ENCODE measurements at regions of chr3 and their contacts with region 1.

Region 1: DNA sequence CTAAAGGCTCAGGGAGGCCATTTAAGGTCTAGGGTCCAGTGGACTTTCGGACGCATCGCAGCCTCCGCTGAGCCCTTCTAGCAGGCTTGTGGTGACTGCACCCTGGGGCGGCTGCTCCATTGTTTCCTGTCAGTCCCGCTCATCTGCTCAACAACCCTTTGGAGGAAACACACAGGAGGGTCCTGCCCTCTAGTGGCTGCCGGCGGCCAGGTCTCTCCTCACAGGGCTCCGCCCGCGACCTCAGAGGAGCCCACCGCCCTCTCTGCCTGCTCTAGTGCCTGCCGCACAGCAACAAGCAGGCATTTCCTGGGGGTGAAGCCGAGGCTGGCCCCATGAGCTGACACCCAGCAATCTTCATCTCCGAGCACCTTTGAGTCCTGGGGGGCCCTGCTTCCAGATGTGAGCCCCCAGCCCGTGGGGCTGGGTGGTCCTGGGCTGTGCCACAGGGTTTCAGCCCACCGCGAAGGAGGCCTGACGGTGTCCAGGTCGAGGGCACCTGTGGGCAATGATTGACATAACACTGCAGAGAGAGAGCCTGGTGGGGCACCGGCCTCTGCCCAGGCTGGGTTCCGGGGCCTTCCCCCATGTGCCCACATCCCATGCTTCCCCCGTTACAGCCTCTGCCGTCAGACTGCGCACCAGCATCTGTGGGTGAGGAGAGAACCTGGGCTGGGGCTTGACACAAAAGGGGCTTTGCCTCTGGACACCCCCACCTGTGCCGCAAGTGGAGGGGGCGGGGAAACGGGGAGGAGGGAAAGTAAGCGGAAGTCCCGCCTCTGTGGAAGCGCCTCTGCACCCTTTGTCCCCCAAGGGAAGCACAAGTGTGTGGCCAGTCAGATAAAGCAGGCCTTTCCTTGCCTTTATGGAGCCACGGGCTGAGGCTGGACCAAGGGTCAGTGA is 27.0 kb upstream of the SFMBT1 start:
- DNase-seq: peak; percentile 82 to 85
- ATAC-seq: peak; percentile 89 to 97 (median 95)
- H3K4me3 ChIP-seq: peak overlapping the region; percentile 33 to 80 (median 72)
- H3K27ac ChIP-seq: peak overlapping the region in 9 of 10 donors; percentile 44 to 85 (median 71)
- H3K4me1 ChIP-seq: peaks cover 4 to 20% (median 10%) of the 10 kb centered on the region in 9 donors
- H3K27me3 ChIP-seq: no peaks in the 10 kb centered on the region
- CTCF ChIP-seq: peak; percentile 79 to 98 (median 96)

Region 2: DNA sequence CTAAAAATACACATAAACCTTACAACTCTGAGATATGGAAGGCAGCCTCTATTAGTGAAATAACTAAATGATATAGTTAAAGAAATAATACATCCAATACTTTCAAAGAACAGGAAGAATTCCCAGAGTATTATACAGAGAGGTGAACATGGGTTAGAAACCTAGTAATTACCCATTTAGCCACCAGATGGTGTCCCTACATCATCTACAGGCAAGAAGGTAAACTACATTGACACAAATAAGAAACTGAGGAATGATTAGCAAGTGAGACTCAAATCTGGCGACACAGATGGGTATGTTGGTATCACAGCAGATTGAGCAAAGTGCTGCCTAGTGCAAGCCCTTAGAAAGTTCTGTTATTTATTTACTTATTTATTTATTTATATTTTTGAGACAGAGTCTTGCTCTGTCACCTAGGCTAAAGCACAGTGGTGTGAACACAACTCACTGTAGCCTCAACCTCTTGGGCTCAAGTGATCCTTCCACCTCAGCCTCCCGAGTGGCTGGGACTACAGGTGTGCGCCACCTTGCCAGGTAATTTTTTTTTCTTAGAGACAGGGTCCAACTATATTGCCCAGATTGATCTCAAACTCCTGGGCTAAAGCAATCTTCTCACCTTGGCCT is 330.4 kb before region 1 on chr3:
- intact Hi-C with region 1: loop called in 8 of 10 experiments (anchors 2 to 10 kb)
- DNase-seq: no peak
- ATAC-seq: peak in 1 of 8 donors; percentile 42
- H3K4me3 ChIP-seq: no peak overlapping the region
- H3K27ac ChIP-seq: no peak overlapping the region
- H3K4me1 ChIP-seq: no peaks in the 10 kb centered on the region
- H3K27me3 ChIP-seq: no peaks in the 10 kb centered on the region
- CTCF ChIP-seq: peak; percentile 35 to 71 (median 60)

Region 3: GRCh38 chr3:52770496-52771333 is 302.2 kb before region 1 on chr3 and contains the start of gene NEK4:
- intact Hi-C with region 1: loop called in 3 of 10 experiments (anchors 2 to 10 kb)
- DNase-seq: peak; percentile 95
- ATAC-seq: peak; percentile 99 to 100 (median 100)
- H3K4me3 ChIP-seq: peak within 1 kb of the TSS; percentile 59 to 98 (median 82)
- H3K27ac ChIP-seq: peak within 1 kb of the TSS in 9 of 10 donors; percentile 75 to 90 (median 85)
- H3K4me1 ChIP-seq: peaks cover 0 to 33% (median 14%) of the 10 kb centered on the region in 9 donors
- H3K27me3 ChIP-seq: no peaks in the 10 kb centered on the region
- CTCF ChIP-seq: peak in 2 of 9 donors; percentile 21 to 25
- total RNA-seq, gene NEK4: 12.9 to 21.4 (median 17.2) TPM

Region 4: GRCh38 chr3:52831500-52832301 is 241.2 kb before region 1 on chr3:
- intact Hi-C with region 1: loop called in 1 of 10 experiments (anchors 5 kb)
- DNase-seq: peak; percentile 41 to 54
- ATAC-seq: peak in 7 of 8 donors; percentile 2 to 45 (median 22)
- H3K4me3 ChIP-seq: peak overlapping the region in 1 of 10 donors; percentile 5
- H3K27ac ChIP-seq: peak overlapping the region in 8 of 10 donors; percentile 3 to 58 (median 34)
- H3K4me1 ChIP-seq: peaks cover 15 to 55% (median 38%) of the 10 kb centered on the region in 9 donors
- H3K27me3 ChIP-seq: no peaks in the 10 kb centered on the region
- CTCF ChIP-seq: no peak

Region 5: GRCh38 chr3:52845691-52846431 is 227.0 kb before region 1 on chr3:
- intact Hi-C with region 1: loop called in 9 of 10 experiments (anchors 2 to 10 kb)
- DNase-seq: peak in 1 of 2 donors; percentile 41
- ATAC-seq: peak in 5 of 8 donors; percentile 11 to 53 (median 25)
- H3K4me3 ChIP-seq: peak overlapping the region in 4 of 10 donors; percentile 7 to 15 (median 12)
- H3K27ac ChIP-seq: peak overlapping the region; percentile 48 to 84 (median 73)
- H3K4me1 ChIP-seq: peaks cover 22 to 64% (median 47%) of the 10 kb centered on the region in 9 donors
- H3K27me3 ChIP-seq: no peaks in the 10 kb centered on the region
- CTCF ChIP-seq: peak; percentile 6 to 61 (median 51)

Region 6: GRCh38 chr3:52851348-52851747 is 221.6 kb before region 1 on chr3:
- intact Hi-C with region 1: loop called in 8 of 10 experiments (anchors 2 to 10 kb)
- DNase-seq: no peak
- ATAC-seq: peak in 6 of 8 donors; percentile 42 to 69 (median 50)
- H3K4me3 ChIP-seq: no peak overlapping the region
- H3K27ac ChIP-seq: no peak overlapping the region
- H3K4me1 ChIP-seq: peaks cover 0 to 9% (median 4%) of the 10 kb centered on the region in 9 donors
- H3K27me3 ChIP-seq: no peaks in the 10 kb centered on the region
- CTCF ChIP-seq: peak in 8 of 9 donors; percentile 10 to 63 (median 50)

Region 7: GRCh38 chr3:52934630-52935530 is 138.0 kb before region 1 on chr3:
- intact Hi-C with region 1: loop called in 7 of 10 experiments (anchors 5 to 10 kb)
- DNase-seq: peak in 1 of 2 donors; percentile 35
- ATAC-seq: peak in 6 of 8 donors; percentile 69 to 81 (median 75)
- H3K4me3 ChIP-seq: no peak overlapping the region
- H3K27ac ChIP-seq: no peak overlapping the region
- H3K4me1 ChIP-seq: peaks cover 0 to 11% (median 0%) of the 10 kb centered on the region in 9 donors
- H3K27me3 ChIP-seq: no peaks in the 10 kb centered on the region
- CTCF ChIP-seq: peak; percentile 40 to 84 (median 74)

Region 8: DNA sequence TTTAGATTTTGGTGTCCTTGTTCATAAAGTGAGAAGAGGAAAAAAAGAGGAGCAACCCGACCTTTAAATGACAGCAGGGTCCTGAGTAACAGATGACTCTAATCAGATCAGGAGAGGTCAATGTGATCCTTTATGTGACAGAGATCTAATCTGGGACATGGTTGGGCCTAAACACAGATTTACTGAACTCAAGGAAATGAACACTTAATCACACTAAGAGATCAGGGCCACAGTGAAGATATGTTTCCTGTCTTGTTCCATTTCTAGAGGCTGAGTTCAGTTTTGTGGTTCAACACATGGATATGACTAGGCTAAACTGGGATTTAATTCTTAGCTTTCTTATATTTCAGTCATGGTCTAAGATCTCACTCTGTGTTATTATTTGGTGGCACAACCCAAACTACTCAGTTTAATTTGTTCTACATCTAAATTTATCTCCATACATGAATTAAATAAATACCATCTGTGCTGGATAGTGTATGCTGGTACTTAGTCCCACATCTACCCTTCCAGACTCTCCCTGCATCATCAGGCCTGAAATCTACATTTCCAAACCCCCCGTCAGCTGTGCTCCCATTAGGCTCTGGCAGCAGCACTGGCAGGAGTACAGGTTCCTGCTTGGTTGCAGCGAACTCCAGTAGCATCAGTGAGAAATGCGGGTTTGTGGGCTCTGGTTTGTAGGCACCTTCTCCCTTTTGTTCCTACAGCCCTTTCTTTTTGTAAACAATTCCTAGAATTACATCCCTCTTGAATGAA is 49.7 kb before region 1 on chr3:
- intact Hi-C with region 1: no loop called
- DNase-seq: no peak
- ATAC-seq: no peak
- H3K4me3 ChIP-seq: no peak overlapping the region
- H3K27ac ChIP-seq: no peak overlapping the region
- H3K4me1 ChIP-seq: peaks cover 0 to 27% (median 17%) of the 10 kb centered on the region in 9 donors
- H3K27me3 ChIP-seq: no peaks in the 10 kb centered on the region
- CTCF ChIP-seq: no peak